Activated CD8-positive, alpha-beta T cell treated with anti-CD3 and anti-CD28 coated beads for 36 hours (primary cell): ENCODE measurements at regions of chr1 and their contacts with region 1.

Region 1: GRCh38 chr1:161021165-161021960 is 411 bp upstream of the F11R start:
- DNase-seq: peak; percentile 90
- ATAC-seq: peak; percentile 95
- H3K4me3 Mint-ChIP-seq: peak overlapping the region; percentile 87
- H3K27ac Mint-ChIP-seq: peak overlapping the region; percentile 81
- H3K4me1 Mint-ChIP-seq: peaks cover 39% of the 10 kb centered on the region
- H3K27me3 Mint-ChIP-seq: no peaks in the 10 kb centered on the region
- CTCF ChIP-seq: no peak

Region 2: GRCh38 chr1:161038523-161039153 is 17.3 kb after region 1 on chr1 and contains the start of gene TSTD1:
- CTCF ChIA-PET with region 1: interaction called, 4 read pairs
- POLR2A ChIA-PET with region 1: interaction called, 11 read pairs
- intact Hi-C with region 1: no loop called
- DNase-seq: peak; percentile 93
- ATAC-seq: peak; percentile 85
- H3K4me3 Mint-ChIP-seq: peak within 1 kb of the TSS; percentile 91
- H3K27ac Mint-ChIP-seq: peak within 1 kb of the TSS; percentile 96
- H3K4me1 Mint-ChIP-seq: peaks cover 61% of the 10 kb centered on the region
- H3K27me3 Mint-ChIP-seq: no peaks in the 10 kb centered on the region
- CTCF ChIP-seq: no peak
- total RNA-seq, gene TSTD1: 70.8 to 78.7 TPM

Region 3: DNA sequence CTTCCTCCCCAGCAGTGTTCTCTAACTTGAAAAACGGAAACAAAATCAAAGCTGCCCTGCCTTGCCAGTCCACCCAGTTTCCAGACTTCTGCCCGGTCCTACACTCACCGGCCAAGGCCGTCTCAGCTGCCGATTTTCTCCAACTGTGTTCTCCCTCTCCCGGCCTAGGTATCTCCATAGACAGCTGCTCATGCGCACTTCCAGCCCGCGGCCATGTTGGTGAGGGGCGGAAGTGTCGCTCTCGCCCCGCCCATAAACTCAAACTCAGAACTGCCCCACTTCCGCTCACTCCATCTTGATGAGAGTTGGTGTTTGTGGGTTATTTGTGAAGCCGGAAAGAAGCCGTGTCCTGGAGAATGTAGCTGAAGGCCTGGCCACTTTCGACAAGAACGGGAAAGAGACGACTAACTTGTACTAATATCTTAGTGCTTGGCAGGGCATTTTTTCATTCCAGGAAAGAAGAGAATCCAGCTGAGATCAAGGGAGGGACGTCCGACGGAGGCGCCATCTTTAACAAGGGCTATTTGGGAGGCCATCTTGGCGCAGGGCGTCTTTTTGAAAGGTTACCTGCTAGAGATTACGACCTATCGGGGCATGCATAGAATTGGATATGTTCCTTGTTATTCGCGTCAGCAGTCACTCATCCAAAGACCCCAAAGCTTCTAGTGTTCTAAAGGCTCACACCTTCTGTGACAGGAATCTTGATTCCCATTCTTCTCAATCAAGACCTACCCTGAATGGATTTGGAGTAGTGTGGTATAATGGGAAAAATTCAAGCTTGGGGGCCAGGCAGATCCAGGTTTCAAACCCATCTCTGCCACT is 24.6 kb after region 1 on chr1 and contains the start of gene USF1:
- CTCF ChIA-PET with region 1: interaction called, 10 read pairs
- POLR2A ChIA-PET with region 1: interaction called, 11 read pairs
- intact Hi-C with region 1: no loop called
- DNase-seq: peak; percentile 96
- ATAC-seq: peak; percentile 83
- H3K4me3 Mint-ChIP-seq: peak within 1 kb of the TSS; percentile 84
- H3K27ac Mint-ChIP-seq: peak within 1 kb of the TSS; percentile 98
- H3K4me1 Mint-ChIP-seq: peaks cover 36% of the 10 kb centered on the region
- H3K27me3 Mint-ChIP-seq: no peaks in the 10 kb centered on the region
- CTCF ChIP-seq: no peak
- total RNA-seq, gene USF1: 50.0 to 52.1 TPM

Region 4: DNA sequence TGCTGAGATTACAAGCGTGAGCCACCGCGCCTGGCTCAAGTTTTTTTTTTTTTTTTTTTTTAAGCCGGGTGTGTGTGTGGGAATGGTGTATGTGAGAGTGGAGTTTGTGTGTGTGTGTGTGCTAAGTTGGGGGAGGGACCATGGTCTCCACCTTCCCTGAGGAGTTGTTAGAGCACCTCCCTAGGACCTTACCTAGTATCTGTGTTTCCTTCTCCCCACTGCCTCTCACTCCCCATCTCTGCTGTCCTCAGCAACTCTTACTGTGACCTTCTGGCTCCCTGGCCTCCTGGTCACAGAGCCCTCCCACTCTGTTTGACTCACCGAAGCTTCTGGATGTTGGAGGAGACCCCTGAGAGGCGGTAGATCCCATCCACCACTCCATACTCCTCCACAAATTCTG is 37.9 kb after region 1 on chr1:
- CTCF ChIA-PET with region 1: no interaction called
- POLR2A ChIA-PET with region 1: no interaction called
- intact Hi-C with region 1: no loop called
- DNase-seq: no peak
- ATAC-seq: peak; percentile 18
- H3K4me3 Mint-ChIP-seq: no peak overlapping the region
- H3K27ac Mint-ChIP-seq: peak overlapping the region; percentile 80
- H3K4me1 Mint-ChIP-seq: peaks cover 52% of the 10 kb centered on the region
- H3K27me3 Mint-ChIP-seq: no peaks in the 10 kb centered on the region
- CTCF ChIP-seq: no peak